ENCODE measurements at regions of chr19 and their contacts with region 1.

Region 1: GRCh38 chr19:38402967-38403861 is at the start of gene FAM98C:
- DNase-seq: peak; percentile 99
- ATAC-seq: peak; percentile 97
- H3K4me3 Mint-ChIP-seq: peak within 1 kb of the TSS; percentile 91
- H3K27ac Mint-ChIP-seq: peak within 1 kb of the TSS; percentile 90
- H3K4me1 Mint-ChIP-seq: peaks cover 22% of the 10 kb centered on the region
- H3K27me3 Mint-ChIP-seq: peaks cover 6% of the 10 kb centered on the region
- CTCF ChIP-seq: peak; percentile 98
- total RNA-seq, gene FAM98C: 38.3 and 40.0 TPM in 2 replicates

Region 2: DNA sequence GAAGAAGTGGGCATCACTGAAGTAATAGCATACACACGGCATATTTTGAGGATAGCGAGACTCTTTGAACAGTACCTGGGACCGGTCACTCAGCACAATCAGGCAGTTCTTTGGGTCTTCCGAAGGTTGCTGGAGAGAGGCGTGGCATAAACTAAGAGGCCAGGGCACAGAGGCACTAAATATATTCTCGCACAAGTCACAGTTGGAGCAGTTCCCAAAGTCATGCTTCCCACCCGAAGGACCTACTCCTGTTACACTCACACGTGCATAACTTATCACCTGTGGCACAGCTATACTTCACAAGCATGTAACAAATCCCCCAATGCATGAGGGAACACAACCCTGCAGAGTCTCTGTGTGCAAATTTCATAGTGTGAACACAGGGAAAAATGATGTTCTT is 507.0 kb before region 1 on chr19:
- CTCF ChIA-PET with region 1: interaction called, 8 read pairs
- POLR2A ChIA-PET with region 1: no interaction called
- intact Hi-C with region 1: loop called (anchors 5 kb)
- DNase-seq: no peak
- ATAC-seq: no peak
- H3K4me3 Mint-ChIP-seq: no peak overlapping the region
- H3K27ac Mint-ChIP-seq: no peak overlapping the region
- H3K4me1 Mint-ChIP-seq: peaks cover 6% of the 10 kb centered on the region
- H3K27me3 Mint-ChIP-seq: peaks cover 21% of the 10 kb centered on the region
- CTCF ChIP-seq: no peak

Region 3: DNA sequence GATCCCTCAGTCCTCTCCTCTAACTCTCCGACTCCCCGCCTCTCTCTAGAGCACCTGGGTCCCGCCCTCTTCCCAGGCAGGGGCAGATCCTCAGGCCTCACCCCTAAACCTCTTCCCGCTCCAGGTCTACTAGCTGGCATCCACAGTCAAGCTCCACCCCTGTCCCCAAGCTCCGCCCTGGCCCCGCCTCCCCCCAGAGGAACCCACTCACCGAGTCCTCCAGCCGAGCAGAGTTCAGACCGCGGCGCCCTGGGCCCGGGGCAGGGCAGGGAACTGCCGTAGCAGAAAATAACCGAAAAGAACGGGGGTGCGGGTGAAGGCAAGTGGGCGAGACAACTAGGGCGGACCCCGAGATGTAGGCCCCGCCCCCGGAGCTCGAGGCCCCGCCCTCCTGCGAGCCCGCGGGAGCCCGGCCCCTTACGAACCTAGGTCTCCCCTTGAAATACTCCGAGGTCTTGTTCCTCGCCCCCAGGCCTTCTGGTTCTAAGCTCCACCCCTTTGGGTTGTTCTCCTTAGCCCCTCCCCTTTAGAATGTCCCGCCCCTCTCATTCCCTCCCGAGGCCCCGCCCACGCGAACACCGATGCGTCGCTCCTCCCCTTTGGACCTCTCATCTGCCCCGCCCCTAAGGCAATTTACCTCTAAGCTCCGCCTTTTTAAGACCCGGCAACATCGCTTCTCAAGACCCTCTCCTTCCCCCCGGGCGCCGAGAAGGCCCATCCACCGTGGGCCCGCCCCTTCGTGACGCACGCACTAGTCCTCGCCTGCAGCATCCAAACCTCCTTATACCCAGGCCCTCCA is 15.5 kb before region 1 on chr19 and contains the start of gene GGN:
- CTCF ChIA-PET with region 1: interaction called, 25 read pairs
- POLR2A ChIA-PET with region 1: interaction called, 17 read pairs
- intact Hi-C with region 1: no loop called
- DNase-seq: peak; percentile 73
- ATAC-seq: peak; percentile 72
- H3K4me3 Mint-ChIP-seq: peak within 1 kb of the TSS; percentile 87
- H3K27ac Mint-ChIP-seq: peak within 1 kb of the TSS; percentile 42
- H3K4me1 Mint-ChIP-seq: peaks cover 25% of the 10 kb centered on the region
- H3K27me3 Mint-ChIP-seq: peaks cover 27% of the 10 kb centered on the region
- CTCF ChIP-seq: no peak
- total RNA-seq, gene GGN: 0.22 and 1.2 TPM in 2 replicates

Region 4: GRCh38 chr19:38441657-38442348 is 38.6 kb after region 1 on chr19:
- CTCF ChIA-PET with region 1: interaction called, 6 read pairs
- POLR2A ChIA-PET with region 1: interaction called, 3 read pairs
- intact Hi-C with region 1: loop called (anchors 1 kb)
- DNase-seq: no peak
- ATAC-seq: peak; percentile 45
- H3K4me3 Mint-ChIP-seq: no peak overlapping the region
- H3K27ac Mint-ChIP-seq: no peak overlapping the region
- H3K4me1 Mint-ChIP-seq: peaks cover 2% of the 10 kb centered on the region
- H3K27me3 Mint-ChIP-seq: peaks cover 18% of the 10 kb centered on the region
- CTCF ChIP-seq: no peak

Region 5: DNA sequence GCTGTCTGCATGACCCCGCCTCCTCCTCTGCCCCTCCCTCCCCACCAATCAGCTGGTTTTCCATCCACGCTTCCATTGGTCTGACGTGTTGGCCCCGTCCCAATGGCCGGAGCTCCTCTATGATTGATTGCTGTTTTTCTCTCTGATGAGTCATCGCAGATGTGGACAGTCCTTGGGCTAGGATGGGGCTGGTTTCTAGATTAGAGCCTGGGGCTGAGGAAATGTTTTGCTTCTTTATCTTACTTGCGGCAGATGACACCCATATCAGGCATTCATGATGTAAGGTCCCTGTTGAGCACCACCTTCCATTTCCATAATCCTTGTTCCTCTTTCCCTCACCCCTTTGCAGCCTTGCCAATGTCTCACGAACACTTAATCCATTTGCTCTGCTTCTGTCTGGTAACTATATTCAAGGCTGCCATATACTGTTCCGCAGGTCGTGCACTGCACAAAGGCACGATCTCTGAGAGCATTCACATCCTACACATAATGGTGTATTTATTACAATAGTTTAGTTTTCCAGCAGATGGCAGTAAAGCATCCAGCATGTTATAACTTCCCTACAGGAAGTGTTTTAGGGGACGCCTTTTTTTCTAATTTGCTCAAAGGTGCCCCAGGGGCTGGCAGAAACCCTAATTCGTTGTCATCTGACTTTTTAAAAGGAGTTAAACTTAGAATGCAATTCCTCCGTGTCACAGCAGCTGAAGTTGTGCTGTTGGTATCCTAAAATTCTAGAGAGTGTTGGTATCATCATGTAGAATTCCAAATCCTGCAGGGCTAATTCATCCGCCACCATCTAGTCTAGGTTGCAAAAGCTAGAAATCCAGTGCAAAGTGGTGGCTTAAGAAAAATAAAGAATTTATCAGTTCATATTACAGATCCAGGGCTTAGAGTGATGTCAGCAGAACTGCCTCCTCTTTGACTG is 141.1 kb after region 1 on chr19:
- CTCF ChIA-PET with region 1: interaction called, 10 read pairs
- POLR2A ChIA-PET with region 1: no interaction called
- intact Hi-C with region 1: loop called (anchors 1 kb)
- DNase-seq: no peak
- ATAC-seq: peak; percentile 65
- H3K4me3 Mint-ChIP-seq: peak overlapping the region; percentile 11
- H3K27ac Mint-ChIP-seq: peak overlapping the region; percentile 30
- H3K4me1 Mint-ChIP-seq: peaks cover 33% of the 10 kb centered on the region
- H3K27me3 Mint-ChIP-seq: no peaks in the 10 kb centered on the region
- CTCF ChIP-seq: peak; percentile 41

Region 6: GRCh38 chr19:38647368-38647965 is 244.3 kb after region 1 on chr19 and contains the start of gene ACTN4:
- CTCF ChIA-PET with region 1: interaction called, 10 read pairs
- POLR2A ChIA-PET with region 1: interaction called, 8 read pairs
- intact Hi-C with region 1: no loop called
- DNase-seq: peak; percentile 100
- ATAC-seq: peak; percentile 91
- H3K4me3 Mint-ChIP-seq: peak within 1 kb of the TSS; percentile 95
- H3K27ac Mint-ChIP-seq: peak within 1 kb of the TSS; percentile 82
- H3K4me1 Mint-ChIP-seq: peaks cover 42% of the 10 kb centered on the region
- H3K27me3 Mint-ChIP-seq: no peaks in the 10 kb centered on the region
- CTCF ChIP-seq: no peak
- total RNA-seq, gene ACTN4: 197 and 198 TPM in 2 replicates